HepG2 (cell line): ENCODE measurements at regions of chr12 and their contacts with region 1.

Region 1: DNA sequence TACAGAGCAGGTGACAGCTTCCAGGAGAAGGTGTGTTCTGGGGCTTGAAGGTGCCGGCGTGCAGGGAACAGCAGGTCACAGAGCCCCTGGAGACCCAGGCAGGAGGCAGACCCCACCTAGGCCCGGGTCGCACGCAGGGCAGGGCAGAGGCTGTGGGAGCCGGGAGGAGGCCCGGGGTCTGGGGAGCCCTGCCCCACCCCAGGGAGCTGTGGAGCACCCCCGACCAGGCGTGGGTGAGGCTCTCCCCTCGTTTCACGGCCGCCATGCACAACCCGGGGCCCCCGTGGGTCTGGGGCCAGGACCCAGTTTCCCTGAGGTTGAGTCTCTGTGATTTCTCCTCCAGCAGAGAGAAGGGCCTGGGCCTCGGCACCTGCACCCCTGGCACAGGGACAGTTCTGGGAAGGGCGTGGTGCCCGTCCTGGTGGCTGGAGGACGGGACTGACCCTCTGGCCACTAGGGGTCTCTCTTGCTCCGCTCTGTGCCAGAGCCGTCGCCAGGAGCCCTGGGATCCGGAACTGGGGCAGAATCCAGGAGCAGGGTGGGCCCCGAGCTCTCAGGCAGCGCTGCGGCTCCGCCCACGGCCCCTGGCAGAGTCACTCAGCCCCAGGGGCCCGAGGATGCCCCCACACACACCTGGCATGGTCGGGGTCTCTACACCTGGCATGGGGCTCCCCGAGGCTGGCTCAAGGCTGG is 75.2 kb upstream of the FBRSL1 start:
- DNase-seq: peak; percentile 62
- ATAC-seq: peak; percentile 89
- H3K4me3 ChIP-seq: peak overlapping the region in 1 of 3 experiments; percentile 49; a peak in 1 of 6 replicates
- H3K27ac ChIP-seq: no peak overlapping the region
- H3K4me1 ChIP-seq: peaks cover 17% of the 10 kb centered on the region
- H3K27me3 ChIP-seq: peaks cover 9 to 51% of the 10 kb centered on the region in 2 experiments
- CTCF ChIP-seq: peak; percentile 97
- EP300 ChIP-seq: no peak
- POLR2A ChIP-seq: no peak
- RAD21 ChIP-seq: peak; percentile 97

Region 2: DNA sequence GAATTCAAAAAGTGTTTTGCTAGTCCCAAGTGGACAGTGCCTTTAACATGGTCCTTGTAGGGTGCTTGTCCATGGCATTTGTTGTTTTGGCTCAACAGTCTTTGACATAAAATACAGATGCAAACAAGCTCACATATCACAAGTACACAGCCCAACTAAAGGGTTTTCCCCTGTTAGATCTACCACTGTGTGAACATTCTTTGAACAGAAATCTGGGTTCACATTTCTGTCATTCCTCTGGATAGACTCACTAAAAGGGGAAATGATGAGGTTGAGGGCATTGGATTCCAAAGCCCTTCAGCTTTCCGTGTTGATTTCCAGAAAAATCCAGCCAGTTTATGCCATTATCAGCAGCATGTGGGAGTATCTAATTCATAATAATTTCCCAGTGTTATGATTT is 410.9 kb before region 1 on chr12:
- CTCF ChIA-PET with region 1: no interaction called
- POLR2A ChIA-PET with region 1: no interaction called
- in situ Hi-C with region 1: no loop called
- intact Hi-C with region 1: no loop called
- DNase-seq: no peak
- ATAC-seq: no peak
- H3K4me3 ChIP-seq: no peak overlapping the region
- H3K27ac ChIP-seq: no peak overlapping the region
- H3K4me1 ChIP-seq: no peaks in the 10 kb centered on the region
- H3K27me3 ChIP-seq: no peaks in the 10 kb centered on the region; a peak in 1 of 5 replicates
- CTCF ChIP-seq: no peak
- EP300 ChIP-seq: no peak
- POLR2A ChIP-seq: no peak
- RAD21 ChIP-seq: no peak

Region 3: GRCh38 chr12:132153501-132154340 is 261.1 kb before region 1 on chr12:
- CTCF ChIA-PET with region 1: interaction called, 6 read pairs
- POLR2A ChIA-PET with region 1: no interaction called
- in situ Hi-C with region 1: no loop called
- intact Hi-C with region 1: loop called (anchors 2 kb)
- DNase-seq: peak; percentile 63
- ATAC-seq: peak; percentile 94
- H3K4me3 ChIP-seq: peak overlapping the region; percentile 39 to 70 (median 48); a peak in 5 of 6 replicates
- H3K27ac ChIP-seq: no peak overlapping the region
- H3K4me1 ChIP-seq: peaks cover 14% of the 10 kb centered on the region
- H3K27me3 ChIP-seq: no peaks in the 10 kb centered on the region
- CTCF ChIP-seq: peak; percentile 96
- EP300 ChIP-seq: no peak
- POLR2A ChIP-seq: no peak
- RAD21 ChIP-seq: peak; percentile 96

Region 4: DNA sequence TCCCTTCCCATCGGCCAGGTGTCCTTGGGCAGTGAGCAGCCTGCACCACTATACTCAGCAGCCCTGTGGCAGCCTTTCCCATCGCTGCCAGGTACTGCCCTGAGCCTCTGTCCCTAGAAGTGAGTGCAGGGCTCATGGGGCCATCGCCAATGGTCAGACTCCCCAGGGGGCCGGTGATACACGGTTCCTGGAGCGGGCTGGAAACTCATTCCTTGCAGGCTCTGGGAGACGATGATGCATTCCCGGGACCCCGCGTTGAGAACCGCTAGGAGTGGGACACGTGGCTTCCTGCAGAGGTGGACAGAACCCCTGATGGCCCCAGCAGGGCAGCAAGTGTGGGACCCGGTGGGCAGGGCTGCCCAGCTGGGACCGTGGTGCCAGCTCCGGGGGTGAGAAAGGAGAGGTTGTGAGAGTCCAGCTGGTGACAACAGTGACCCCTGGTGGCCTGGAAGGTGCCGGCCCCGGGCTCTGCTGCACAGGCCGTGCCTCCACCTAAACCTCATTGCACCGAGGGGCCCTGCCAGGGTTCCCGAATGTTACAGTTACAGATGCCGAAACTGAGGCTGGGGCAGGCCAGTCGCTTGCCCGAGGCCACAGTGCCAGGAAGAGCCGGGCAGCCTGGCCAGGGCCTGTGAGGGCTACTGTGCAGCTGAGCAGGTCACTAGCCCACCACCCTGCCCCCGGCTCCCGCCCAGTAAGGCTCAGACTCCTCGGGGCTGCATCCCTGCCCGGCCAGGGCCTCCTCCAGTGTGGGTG is 109.0 kb after region 1 on chr12:
- CTCF ChIA-PET with region 1: interaction called, 31 read pairs
- POLR2A ChIA-PET with region 1: no interaction called
- in situ Hi-C with region 1: loop called (anchors 5 kb)
- intact Hi-C with region 1: loop called (anchors 5 kb)
- DNase-seq: peak; percentile 32
- ATAC-seq: peak; percentile 76
- H3K4me3 ChIP-seq: no peak overlapping the region
- H3K27ac ChIP-seq: no peak overlapping the region
- H3K4me1 ChIP-seq: no peaks in the 10 kb centered on the region; the same call in 1 of the 2 replicates
- H3K27me3 ChIP-seq: no peaks in the 10 kb centered on the region
- CTCF ChIP-seq: peak; percentile 90
- EP300 ChIP-seq: no peak
- POLR2A ChIP-seq: no peak
- RAD21 ChIP-seq: peak; percentile 91

Region 5: DNA sequence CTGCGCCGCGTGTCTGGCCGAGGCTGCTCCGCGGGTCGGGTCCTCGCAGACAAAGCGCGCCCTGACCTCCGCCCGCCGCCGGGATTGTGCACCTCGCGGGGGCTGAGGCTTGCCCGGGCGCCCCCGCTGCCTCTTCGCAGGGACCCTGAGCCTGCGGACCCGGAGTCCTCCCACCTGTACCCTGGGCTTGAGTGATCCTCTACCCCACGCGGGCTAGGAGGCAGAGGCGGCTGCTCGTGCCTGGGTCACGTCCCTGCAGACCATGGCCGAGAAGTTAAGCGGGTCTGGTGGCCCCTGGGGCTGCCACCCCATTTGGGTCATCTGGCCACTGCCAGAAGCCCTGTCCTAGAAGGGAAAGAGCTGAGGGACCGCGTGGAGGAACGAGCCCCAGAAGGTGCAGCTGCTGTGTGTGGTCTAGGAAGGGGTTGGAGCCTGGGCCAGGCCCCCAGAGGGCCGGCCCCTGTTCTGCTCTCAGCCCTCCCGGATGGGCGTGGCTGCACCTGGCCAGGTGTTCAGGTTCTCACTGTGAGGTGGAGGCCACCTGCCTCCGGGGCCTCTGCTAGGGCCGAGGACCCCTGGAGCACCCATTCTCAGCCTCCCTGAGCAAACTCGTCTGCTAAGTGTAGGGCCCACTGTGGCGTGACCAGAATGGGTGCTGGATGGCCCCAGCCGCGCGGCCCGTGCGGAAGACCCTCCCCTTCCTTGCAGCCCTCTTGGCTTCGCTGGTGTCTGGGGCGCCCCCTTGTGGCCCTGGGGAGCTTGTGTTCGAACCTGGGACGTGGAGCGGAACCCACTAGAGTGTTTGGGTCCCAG is 146.0 kb after region 1 on chr12:
- CTCF ChIA-PET with region 1: interaction called, 17 read pairs
- POLR2A ChIA-PET with region 1: no interaction called
- in situ Hi-C with region 1: loop called (anchors 5 kb)
- intact Hi-C with region 1: loop called (anchors 2 kb)
- DNase-seq: peak; percentile 62
- ATAC-seq: peak; percentile 47
- H3K4me3 ChIP-seq: peak overlapping the region; percentile 51 to 76 (median 61)
- H3K27ac ChIP-seq: no peak overlapping the region
- H3K4me1 ChIP-seq: peaks cover 33% of the 10 kb centered on the region
- H3K27me3 ChIP-seq: no peaks in the 10 kb centered on the region
- CTCF ChIP-seq: peak; percentile 88
- EP300 ChIP-seq: no peak
- POLR2A ChIP-seq: no peak
- RAD21 ChIP-seq: peak; percentile 54

Region 6: DNA sequence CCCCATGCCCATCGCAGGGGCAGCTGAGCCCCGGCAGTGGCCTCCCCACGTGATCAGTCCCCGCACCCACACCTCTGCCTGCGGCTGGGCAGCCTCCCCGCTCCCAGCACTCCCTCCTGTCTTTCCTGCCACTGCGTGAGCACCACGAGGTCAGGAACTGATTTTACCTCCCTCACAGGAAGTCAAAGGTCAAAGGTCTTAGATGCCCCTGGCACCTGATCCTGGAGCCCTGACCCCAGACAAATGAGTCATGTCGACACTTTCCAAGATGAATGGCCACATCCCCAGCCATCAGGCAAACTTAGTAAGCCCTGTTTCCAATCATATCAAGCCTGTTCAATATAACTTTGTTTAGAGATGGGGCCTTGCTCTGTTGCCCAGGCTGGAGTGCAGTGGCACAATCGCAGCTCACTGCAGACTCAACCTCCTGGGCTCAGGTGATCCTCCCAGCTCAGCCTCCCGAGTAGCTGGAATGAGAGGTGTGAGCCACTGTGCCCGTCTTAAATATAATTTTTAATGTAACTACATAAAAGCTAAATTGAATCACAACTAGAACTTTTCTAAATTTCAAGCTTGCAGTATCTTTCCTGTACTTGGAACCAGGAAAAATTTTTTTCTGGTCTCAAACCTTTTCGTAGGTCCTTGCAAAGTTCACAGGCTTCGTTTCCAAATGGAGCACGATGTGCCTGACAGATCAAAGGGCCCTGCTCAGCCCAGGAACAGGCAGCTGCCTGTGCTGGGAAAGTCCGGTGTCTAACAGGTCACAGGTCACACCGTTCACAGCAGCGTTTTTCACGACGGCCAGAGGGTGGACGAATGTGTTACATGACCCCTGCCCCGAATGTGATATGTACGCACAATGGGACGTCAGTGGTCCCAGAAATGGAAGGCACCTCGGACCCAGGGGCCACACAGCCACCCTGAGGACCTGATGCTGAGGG is 193.7 kb after region 1 on chr12:
- CTCF ChIA-PET with region 1: no interaction called
- POLR2A ChIA-PET with region 1: no interaction called
- in situ Hi-C with region 1: loop called (anchors 5 kb)
- intact Hi-C with region 1: no loop called
- DNase-seq: peak; percentile 83
- ATAC-seq: peak; percentile 91
- H3K4me3 ChIP-seq: peak overlapping the region in 1 of 3 experiments; percentile 44; a peak in 2 of 6 replicates
- H3K27ac ChIP-seq: peak overlapping the region; percentile 65
- H3K4me1 ChIP-seq: peaks cover 39% of the 10 kb centered on the region
- H3K27me3 ChIP-seq: peaks cover 0 to 27% of the 10 kb centered on the region in 2 experiments; a peak in 4 of 5 replicates
- CTCF ChIP-seq: peak; percentile 9; the same call in 1 of the 2 replicates
- EP300 ChIP-seq: peak in 1 of 2 experiments; percentile 55; a peak in 2 of 4 replicates
- POLR2A ChIP-seq: no peak
- RAD21 ChIP-seq: no peak

Region 7: DNA sequence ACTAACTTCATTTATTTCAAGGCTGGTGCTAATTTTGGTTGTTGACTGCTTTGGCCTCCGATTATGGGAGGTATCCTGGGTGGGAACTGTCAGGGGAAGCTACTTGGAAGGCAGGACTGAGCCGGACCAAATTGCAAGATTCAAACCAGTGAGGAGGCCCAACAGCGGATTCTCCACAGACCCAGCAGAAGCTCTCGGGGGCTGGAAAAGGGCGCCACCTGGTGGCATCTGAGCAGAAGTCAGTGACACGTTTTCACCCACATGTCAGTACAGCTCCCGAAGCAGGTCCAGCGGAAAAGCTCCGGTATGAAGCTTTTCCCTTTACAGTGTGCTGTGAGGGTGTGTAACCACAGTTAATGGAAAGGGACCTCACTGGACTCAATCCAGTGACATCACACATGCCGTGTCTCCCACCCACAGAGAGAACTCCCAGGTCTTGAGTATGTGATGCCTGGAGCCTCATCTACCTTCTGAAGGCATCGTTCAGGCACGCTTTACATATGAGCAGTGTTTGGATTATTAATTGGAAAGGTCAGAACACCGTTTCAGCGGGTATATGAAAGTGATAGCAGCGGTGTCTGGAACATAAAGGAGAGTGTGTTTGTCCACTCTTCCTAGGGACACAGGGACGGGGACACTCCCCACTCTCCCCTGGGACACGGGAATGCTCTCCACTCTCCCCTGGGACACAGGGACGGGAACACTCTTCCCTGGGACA is 200.2 kb after region 1 on chr12:
- CTCF ChIA-PET with region 1: interaction called, 11 read pairs
- POLR2A ChIA-PET with region 1: no interaction called
- in situ Hi-C with region 1: no loop called
- intact Hi-C with region 1: loop called (anchors 1 kb)
- DNase-seq: peak; percentile 76
- ATAC-seq: peak; percentile 88
- H3K4me3 ChIP-seq: no peak overlapping the region
- H3K27ac ChIP-seq: no peak overlapping the region
- H3K4me1 ChIP-seq: no peaks in the 10 kb centered on the region
- H3K27me3 ChIP-seq: peaks cover 0 to 9% of the 10 kb centered on the region in 2 experiments; a peak in 4 of 5 replicates
- CTCF ChIP-seq: peak; percentile 96
- EP300 ChIP-seq: no peak
- POLR2A ChIP-seq: no peak
- RAD21 ChIP-seq: peak; percentile 91